CD4-positive, alpha-beta memory T cell (primary cell): ENCODE measurements at regions of chr1 and their contacts with region 1.

Region 1: GRCh38 chr1:9629445-9630201 is 21.9 kb upstream of the PIK3CD start:
- DNase-seq: peak; percentile 73 to 82 (median 78)
- H3K4me3 ChIP-seq: peak overlapping the region; percentile 95
- H3K4me3 Mint-ChIP-seq: peak overlapping the region; percentile 87 to 96 (median 92)
- H3K27ac ChIP-seq: peak overlapping the region; percentile 75
- H3K27ac Mint-ChIP-seq: peak overlapping the region; percentile 81 to 98 (median 88)
- H3K4me1 ChIP-seq: peaks cover 78% of the 10 kb centered on the region
- H3K4me1 Mint-ChIP-seq: peaks cover 29 to 85% (median 52%) of the 10 kb centered on the region in 4 donors
- H3K27me3 ChIP-seq: no peaks in the 10 kb centered on the region
- H3K27me3 Mint-ChIP-seq: no peaks in the 10 kb centered on the region

Region 2: GRCh38 chr1:8154621-8155052 is 1475.0 kb before region 1 on chr1:
- CTCF ChIA-PET with region 1: no interaction called
- POLR2A ChIA-PET with region 1: no interaction called
- intact Hi-C with region 1: no loop called
- DNase-seq: no peak
- H3K4me3 ChIP-seq: no peak overlapping the region
- H3K4me3 Mint-ChIP-seq: no peak overlapping the region
- H3K27ac ChIP-seq: no peak overlapping the region
- H3K27ac Mint-ChIP-seq: peak overlapping the region in 4 of 7 donors; percentile 42 to 74 (median 56)
- H3K4me1 ChIP-seq: peaks cover 50% of the 10 kb centered on the region
- H3K4me1 Mint-ChIP-seq: peaks cover 28 to 59% (median 39%) of the 10 kb centered on the region in 4 donors
- H3K27me3 ChIP-seq: no peaks in the 10 kb centered on the region
- H3K27me3 Mint-ChIP-seq: no peaks in the 10 kb centered on the region

Region 3: DNA sequence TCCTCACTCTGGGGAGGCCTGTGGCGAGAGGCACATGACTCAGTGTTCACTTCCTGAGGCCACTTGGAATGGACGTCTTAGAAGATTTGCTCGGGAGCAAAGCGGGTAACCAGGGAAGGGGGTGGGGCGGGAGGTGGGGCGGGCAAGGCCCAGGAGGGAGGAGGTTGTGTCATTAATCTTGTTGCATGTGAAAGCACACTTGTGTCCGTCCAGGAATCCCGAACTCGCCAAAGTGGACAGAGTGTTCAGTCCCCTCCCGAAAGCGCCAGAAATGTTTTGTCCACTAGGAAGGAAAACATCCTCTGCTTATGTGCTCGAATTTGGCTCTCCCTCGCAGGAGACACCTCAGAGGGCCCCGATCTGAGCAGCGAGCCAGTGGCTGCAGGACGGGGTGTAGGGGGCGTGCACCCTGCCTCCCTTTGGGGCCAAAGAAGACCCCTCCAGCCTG is 252.7 kb before region 1 on chr1:
- CTCF ChIA-PET with region 1: no interaction called
- POLR2A ChIA-PET with region 1: no interaction called
- intact Hi-C with region 1: no loop called
- DNase-seq: no peak
- H3K4me3 ChIP-seq: no peak overlapping the region
- H3K4me3 Mint-ChIP-seq: no peak overlapping the region
- H3K27ac ChIP-seq: no peak overlapping the region
- H3K27ac Mint-ChIP-seq: peak overlapping the region in 1 of 7 donors; percentile 47
- H3K4me1 ChIP-seq: no peaks in the 10 kb centered on the region
- H3K4me1 Mint-ChIP-seq: peaks cover 0 to 2% (median 0%) of the 10 kb centered on the region in 4 donors
- H3K27me3 ChIP-seq: no peaks in the 10 kb centered on the region
- H3K27me3 Mint-ChIP-seq: peaks cover 0 to 2% of the 10 kb centered on the region in 2 donors

Region 4: DNA sequence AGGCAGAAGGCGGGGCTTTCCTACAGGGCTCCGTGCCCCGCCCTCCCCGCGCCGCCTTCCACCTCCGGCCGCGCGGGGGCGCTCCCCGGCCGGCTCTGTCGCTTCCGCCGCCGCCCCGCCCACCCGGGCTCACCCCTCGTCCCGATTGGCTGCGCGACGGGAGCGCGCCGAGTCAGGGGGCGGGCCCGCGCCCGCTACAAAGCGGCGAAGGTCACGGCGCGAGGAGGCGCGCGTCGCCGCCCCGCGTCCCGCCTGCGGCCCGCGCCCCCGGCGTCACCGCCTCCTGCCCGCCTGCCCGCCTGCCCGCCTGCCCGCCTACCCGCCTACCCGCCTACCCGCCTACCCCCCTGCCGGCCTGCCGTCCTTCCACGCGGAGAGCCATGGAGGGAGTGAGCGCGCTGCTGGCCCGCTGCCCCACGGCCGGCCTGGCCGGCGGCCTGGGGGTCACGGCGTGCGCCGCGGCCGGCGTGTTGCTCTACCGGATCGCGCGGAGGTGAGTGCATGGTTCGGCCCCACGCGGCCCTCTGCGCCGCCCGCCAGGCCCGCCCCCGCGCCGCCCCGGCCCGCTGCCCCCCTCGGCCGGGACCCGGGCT is 41.0 kb before region 1 on chr1 and contains the start of gene TMEM201:
- CTCF ChIA-PET with region 1: interaction called, 3 read pairs
- POLR2A ChIA-PET with region 1: interaction called, 4 read pairs
- intact Hi-C with region 1: loop called (anchors 1 kb)
- DNase-seq: peak; percentile 88 to 95 (median 94)
- H3K4me3 ChIP-seq: peak within 1 kb of the TSS in 1 of 2 donors; percentile 57
- H3K4me3 Mint-ChIP-seq: peak within 1 kb of the TSS; percentile 84 to 91 (median 86)
- H3K27ac ChIP-seq: peak within 1 kb of the TSS; percentile 47
- H3K27ac Mint-ChIP-seq: peak within 1 kb of the TSS; percentile 73 to 87 (median 82)
- H3K4me1 ChIP-seq: peaks cover 39% of the 10 kb centered on the region
- H3K4me1 Mint-ChIP-seq: peaks cover 14 to 47% (median 25%) of the 10 kb centered on the region in 4 donors
- H3K27me3 ChIP-seq: no peaks in the 10 kb centered on the region
- H3K27me3 Mint-ChIP-seq: no peaks in the 10 kb centered on the region
- total RNA-seq, gene TMEM201: 11.2 to 12.9 TPM

Region 5: DNA sequence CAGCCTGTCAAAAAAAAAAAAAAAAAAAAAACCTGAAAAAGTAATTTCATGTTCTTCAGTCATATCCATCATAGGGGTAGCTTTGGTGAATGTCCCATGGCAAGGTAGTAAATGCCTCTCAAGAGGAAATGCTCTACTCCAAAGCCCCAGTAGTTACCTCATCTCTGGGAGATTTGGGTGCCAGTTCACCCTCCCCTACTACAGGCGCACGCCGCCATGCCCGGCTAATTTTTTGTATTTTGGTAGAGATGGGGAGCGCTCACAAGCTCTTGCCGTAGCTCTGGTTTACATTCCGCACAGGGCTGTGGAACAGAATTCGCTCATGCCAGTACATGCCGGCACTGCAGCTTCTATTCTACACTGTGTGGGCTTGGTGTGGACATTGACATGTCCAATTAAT is 35.6 kb after region 1 on chr1:
- CTCF ChIA-PET with region 1: interaction called, 13 read pairs
- POLR2A ChIA-PET with region 1: interaction called, 658 read pairs
- intact Hi-C with region 1: loop called (anchors 5 kb)
- DNase-seq: no peak
- H3K4me3 ChIP-seq: no peak overlapping the region
- H3K4me3 Mint-ChIP-seq: peak overlapping the region in 3 of 8 donors; percentile 40 to 65 (median 54)
- H3K27ac ChIP-seq: no peak overlapping the region
- H3K27ac Mint-ChIP-seq: peak overlapping the region in 6 of 7 donors; percentile 42 to 82 (median 57)
- H3K4me1 ChIP-seq: peaks cover 62% of the 10 kb centered on the region
- H3K4me1 Mint-ChIP-seq: peaks cover 26 to 72% (median 42%) of the 10 kb centered on the region in 4 donors
- H3K27me3 ChIP-seq: no peaks in the 10 kb centered on the region
- H3K27me3 Mint-ChIP-seq: no peaks in the 10 kb centered on the region

Region 6: GRCh38 chr1:9700340-9700739 is 70.7 kb after region 1 on chr1:
- CTCF ChIA-PET with region 1: interaction called, 23 read pairs
- POLR2A ChIA-PET with region 1: interaction called, 22 read pairs
- intact Hi-C with region 1: no loop called
- DNase-seq: no peak
- H3K4me3 ChIP-seq: no peak overlapping the region
- H3K4me3 Mint-ChIP-seq: no peak overlapping the region
- H3K27ac ChIP-seq: no peak overlapping the region
- H3K27ac Mint-ChIP-seq: peak overlapping the region in 5 of 7 donors; percentile 46 to 80 (median 71)
- H3K4me1 ChIP-seq: peaks cover 59% of the 10 kb centered on the region
- H3K4me1 Mint-ChIP-seq: peaks cover 41 to 74% (median 57%) of the 10 kb centered on the region in 4 donors
- H3K27me3 ChIP-seq: no peaks in the 10 kb centered on the region
- H3K27me3 Mint-ChIP-seq: no peaks in the 10 kb centered on the region

Region 7: GRCh38 chr1:9724706-9725476 is 95.3 kb after region 1 on chr1:
- CTCF ChIA-PET with region 1: interaction called, 219 read pairs
- POLR2A ChIA-PET with region 1: interaction called, 403 read pairs
- intact Hi-C with region 1: loop called (anchors 1 kb)
- DNase-seq: peak; percentile 66 to 71 (median 69)
- H3K4me3 ChIP-seq: no peak overlapping the region
- H3K4me3 Mint-ChIP-seq: peak overlapping the region in 2 of 8 donors; percentile 7 to 68
- H3K27ac ChIP-seq: no peak overlapping the region
- H3K27ac Mint-ChIP-seq: peak overlapping the region; percentile 57 to 93 (median 78)
- H3K4me1 ChIP-seq: peaks cover 84% of the 10 kb centered on the region
- H3K4me1 Mint-ChIP-seq: peaks cover 26 to 80% (median 48%) of the 10 kb centered on the region in 4 donors
- H3K27me3 ChIP-seq: no peaks in the 10 kb centered on the region
- H3K27me3 Mint-ChIP-seq: no peaks in the 10 kb centered on the region

Region 8: GRCh38 chr1:9867408-9868243 is 238.0 kb after region 1 on chr1:
- CTCF ChIA-PET with region 1: interaction called, 11 read pairs
- POLR2A ChIA-PET with region 1: interaction called, 7 read pairs
- intact Hi-C with region 1: loop called (anchors 1 kb)
- DNase-seq: peak; percentile 81 to 86 (median 81)
- H3K4me3 ChIP-seq: no peak overlapping the region
- H3K4me3 Mint-ChIP-seq: no peak overlapping the region
- H3K27ac ChIP-seq: no peak overlapping the region
- H3K27ac Mint-ChIP-seq: peak overlapping the region in 1 of 7 donors; percentile 6
- H3K4me1 ChIP-seq: peaks cover 6% of the 10 kb centered on the region
- H3K4me1 Mint-ChIP-seq: peaks cover 0 to 4% (median 0%) of the 10 kb centered on the region in 4 donors
- H3K27me3 ChIP-seq: no peaks in the 10 kb centered on the region
- H3K27me3 Mint-ChIP-seq: no peaks in the 10 kb centered on the region